ENCODE measurements at regions of chr18 and their contacts with region 1.

Region 1: DNA sequence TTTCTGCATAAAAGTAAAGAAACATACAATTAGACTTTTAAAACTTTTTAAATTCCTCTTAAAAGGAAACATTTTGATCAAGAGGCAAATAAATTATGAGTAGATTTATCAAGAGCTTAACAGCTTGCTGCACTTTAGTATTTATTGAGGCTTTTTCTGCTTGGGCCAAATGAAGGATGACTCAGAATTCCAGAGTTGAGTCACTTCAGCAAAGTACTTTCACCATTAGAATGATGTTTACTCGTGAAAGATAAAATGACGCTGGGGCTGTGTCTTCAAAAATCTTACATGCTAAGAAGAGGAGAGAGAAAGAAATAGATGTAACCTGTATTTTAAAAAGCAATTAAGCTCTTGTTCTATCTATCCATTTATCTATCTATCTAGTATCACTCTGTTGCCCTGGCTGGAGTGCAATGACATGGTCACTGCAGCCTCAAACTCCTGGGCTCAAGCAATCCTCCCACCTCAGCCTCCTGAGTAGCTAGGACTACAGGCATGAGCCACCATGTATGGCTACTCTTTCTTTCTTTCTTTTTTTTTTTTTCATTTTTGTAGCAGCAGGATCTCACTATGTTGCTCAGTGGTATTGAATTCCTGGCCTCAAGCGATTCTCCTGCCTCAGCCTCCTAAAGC is 75.3 kb upstream of the RIOK3 start:
- DNase-seq: no peak
- ATAC-seq: peak; percentile 73
- H3K4me3 ChIP-seq: no peak overlapping the region
- H3K4me1 ChIP-seq: peaks cover 6% of the 10 kb centered on the region
- CTCF ChIP-seq: no peak

Region 2: DNA sequence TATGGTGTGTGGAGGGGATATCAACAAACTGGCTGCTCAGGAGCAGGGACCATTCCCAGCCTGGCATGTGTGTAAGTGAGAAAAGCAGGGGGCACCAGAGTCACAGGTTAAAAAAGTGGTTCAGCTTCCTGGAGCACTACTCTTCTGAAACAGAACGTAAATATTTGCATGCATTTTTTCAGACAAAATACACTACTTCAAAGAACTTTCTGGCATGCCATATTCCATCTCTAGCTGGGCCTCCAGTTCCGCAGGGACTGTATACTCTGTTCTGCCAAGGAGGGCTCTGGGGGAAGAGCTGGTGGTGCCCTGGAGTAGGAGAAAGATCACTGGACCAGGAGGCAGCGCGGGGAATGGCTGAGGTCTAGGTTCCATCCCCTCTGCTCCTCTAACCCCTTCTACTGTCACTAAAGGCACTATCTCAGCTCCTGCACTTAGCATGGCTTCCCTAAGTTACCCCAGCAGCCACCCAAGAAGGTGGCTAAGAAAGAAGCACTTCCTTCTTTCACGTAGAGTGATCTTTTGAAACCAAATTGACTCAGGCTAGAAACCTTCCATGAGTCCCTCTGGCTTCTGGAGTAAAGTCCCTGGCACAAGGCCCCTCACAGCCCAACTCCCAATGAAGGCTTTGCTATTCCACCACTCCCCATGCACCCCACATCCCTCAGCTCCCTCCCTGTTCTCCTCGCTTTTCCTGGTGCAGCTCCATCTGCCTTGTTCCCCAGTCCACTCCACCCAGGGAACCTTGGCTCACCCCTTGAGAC is 300.1 kb before region 1 on chr18:
- intact Hi-C with region 1: loop called in 1 of 2 experiments (anchors 5 kb)
- DNase-seq: peak in 1 of 3 donors; percentile 71
- ATAC-seq: peak; percentile 69
- H3K4me3 ChIP-seq: no peak overlapping the region
- H3K4me1 ChIP-seq: no peaks in the 10 kb centered on the region
- CTCF ChIP-seq: no peak

Region 3: DNA sequence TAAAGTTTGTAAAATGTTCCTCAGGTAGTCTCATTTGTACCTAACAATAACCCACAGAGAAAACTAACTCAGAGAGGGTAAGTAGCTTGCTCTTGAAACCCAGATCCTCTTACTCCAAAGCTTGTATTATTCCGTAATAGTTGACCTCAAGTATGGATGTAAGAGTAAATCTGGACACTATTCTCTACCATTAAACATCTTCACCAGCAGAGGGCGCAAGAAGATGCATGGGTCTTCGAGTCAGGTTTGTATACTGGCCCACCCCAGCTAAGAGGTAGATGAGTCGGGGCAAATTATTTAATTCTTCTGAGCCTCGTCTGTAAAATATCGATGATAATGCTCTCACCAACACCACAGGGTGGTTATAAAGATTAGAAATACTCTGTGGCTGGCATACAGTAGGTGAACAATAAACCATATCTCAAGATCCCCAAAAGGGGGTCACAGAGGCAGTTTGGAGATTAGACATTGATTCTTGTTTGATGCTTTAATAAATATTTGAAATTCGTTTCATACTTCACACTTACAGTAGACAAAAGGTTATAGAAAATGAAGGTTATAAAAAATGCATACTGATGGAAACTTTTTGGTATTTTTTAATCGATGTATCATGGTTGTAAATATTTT is 246.0 kb before region 1 on chr18:
- intact Hi-C with region 1: loop called in 1 of 2 experiments (anchors 10 kb)
- DNase-seq: peak in 1 of 3 donors; percentile 91
- ATAC-seq: peak; percentile 30
- H3K4me3 ChIP-seq: no peak overlapping the region
- H3K4me1 ChIP-seq: peaks cover 15% of the 10 kb centered on the region
- CTCF ChIP-seq: peak; percentile 43

Region 4: GRCh38 chr18:23231340-23232021 is 146.3 kb before region 1 on chr18:
- intact Hi-C with region 1: loop called in 1 of 2 experiments (anchors 10 kb)
- DNase-seq: peak in 1 of 3 donors; percentile 62
- ATAC-seq: peak; percentile 84
- H3K4me3 ChIP-seq: no peak overlapping the region
- H3K4me1 ChIP-seq: no peaks in the 10 kb centered on the region
- CTCF ChIP-seq: no peak

Region 5: DNA sequence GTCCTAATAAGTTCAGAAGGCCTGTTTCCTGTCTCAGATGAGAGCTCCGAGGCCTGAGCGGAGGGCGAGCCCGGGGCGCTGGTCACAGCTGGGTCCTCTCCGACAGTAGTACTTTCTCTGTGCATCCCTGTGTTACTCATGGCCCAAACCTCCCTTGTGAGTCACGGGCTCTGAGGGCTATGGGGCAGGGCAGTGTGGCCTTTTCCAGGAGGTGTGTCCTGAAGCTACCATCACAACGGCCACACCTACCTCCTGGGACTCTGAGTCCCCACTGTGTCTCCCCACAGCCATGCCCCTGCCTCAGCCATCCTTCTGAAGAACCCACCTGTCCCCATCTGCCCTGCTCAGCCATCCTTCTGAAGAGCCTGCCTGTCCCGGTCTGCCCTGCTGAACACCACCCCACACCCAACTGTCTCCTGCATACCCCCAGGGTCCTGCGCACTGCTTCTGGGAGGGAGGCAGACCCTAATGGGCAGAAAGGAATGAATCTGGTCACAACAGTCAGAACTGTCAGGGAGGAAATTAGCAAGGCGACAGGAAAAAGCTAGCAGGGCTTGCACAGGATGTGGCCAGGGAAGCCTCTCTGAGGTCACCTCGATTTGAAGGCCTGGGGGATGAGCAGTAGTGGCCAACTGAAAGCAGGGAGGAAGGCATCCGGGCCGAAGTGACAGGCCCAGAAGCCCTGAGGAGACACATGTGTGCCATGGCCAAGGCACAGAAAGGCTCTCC is 70.1 kb before region 1 on chr18:
- intact Hi-C with region 1: no loop called
- DNase-seq: no peak
- ATAC-seq: peak; percentile 40
- H3K4me3 ChIP-seq: no peak overlapping the region
- H3K4me1 ChIP-seq: no peaks in the 10 kb centered on the region
- CTCF ChIP-seq: no peak

Measured in mucosa of descending colon (tissue), 3 donors.